OCI-LY7 (cell line): ENCODE measurements at regions of chr10 and their contacts with region 1.

Region 1: GRCh38 chr10:101818119-101818871 is at the start of gene OGA:
- DNase-seq: peak; percentile 100
- H3K4me3 ChIP-seq: peak within 1 kb of the TSS; percentile 95
- H3K27ac ChIP-seq: peak within 1 kb of the TSS; percentile 77
- H3K4me1 ChIP-seq: peaks cover 27% of the 10 kb centered on the region
- CTCF ChIP-seq: no peak
- total RNA-seq, gene OGA: 65.5 and 73.2 TPM in 2 replicates

Region 2: DNA sequence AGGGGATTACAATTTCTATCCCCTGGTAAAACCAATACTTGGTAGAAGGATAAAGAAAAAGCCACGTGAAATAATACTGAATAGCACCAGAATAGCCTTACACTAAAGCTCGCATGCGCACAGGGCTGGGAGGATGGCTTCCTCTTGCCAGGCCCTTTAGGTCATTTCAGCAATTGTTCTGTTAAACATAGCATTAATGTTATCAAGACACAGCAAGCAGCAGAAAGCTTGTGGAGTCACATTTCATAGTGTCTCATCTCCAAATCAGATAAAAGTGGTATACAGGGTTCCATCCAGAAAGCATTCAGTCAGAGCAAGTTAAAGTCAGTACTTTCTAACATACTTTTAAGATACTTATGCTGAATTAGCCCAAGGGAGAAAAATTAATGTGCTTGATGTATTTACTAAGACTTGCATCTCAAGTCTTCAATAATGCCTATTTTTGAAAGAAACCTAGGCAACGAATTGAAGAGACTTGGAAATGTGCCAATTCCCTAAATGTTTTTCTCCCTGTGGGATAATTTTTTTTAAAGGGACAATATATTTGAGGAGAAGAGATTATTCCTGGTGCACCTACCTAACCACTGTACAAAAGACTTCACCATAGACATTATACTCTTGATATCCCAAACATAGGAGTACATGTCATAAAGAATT is 20.8 kb before region 1 on chr10:
- CTCF ChIA-PET with region 1: no interaction called
- POLR2A ChIA-PET with region 1: interaction called, 10 read pairs
- intact Hi-C with region 1: no loop called
- DNase-seq: no peak
- H3K4me3 ChIP-seq: no peak overlapping the region
- H3K27ac ChIP-seq: no peak overlapping the region
- H3K4me1 ChIP-seq: no peaks in the 10 kb centered on the region
- CTCF ChIP-seq: no peak

Region 3: DNA sequence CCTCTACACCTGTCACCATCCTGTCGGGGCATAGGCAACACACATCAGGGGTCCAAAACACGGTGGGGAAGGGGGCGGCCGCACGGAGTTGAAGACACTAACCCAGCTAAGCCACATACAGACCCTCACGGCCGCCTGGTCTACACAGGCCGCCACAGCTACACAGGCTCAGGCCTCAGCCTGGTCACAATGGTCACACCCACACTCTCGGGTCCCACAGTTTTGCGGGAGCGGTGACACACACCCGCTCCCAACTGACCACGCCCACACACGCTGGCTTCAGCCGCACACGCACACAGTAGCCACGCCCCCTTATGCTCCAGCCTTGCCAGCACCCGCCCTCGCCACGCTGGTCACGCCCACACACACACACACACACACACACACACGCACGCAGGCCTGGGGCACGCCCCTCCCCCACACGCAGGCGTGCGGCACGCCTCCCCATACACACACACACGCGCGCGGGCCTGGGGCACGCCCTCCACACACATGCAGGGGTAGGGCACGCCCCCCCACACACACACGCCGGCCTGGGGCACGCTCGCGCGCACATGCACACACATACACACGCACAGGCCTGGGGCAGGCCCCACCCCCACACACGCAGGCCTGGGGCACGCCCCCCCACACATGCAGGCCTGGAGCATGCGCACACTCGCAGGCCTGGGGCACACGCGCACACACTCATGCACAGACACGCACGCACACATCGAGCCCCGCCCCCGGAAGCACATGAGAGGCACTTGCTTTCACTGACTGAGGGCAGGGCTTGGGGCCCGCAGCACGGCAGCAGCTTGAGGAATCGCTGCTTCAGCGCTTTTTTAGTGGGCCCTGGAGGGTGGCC is 12.2 kb after region 1 on chr10:
- CTCF ChIA-PET with region 1: interaction called, 7 read pairs
- POLR2A ChIA-PET with region 1: interaction called, 10 read pairs
- intact Hi-C with region 1: loop called (anchors 1 kb)
- DNase-seq: peak; percentile 92
- H3K4me3 ChIP-seq: peak overlapping the region; percentile 65
- H3K27ac ChIP-seq: peak overlapping the region; percentile 87
- H3K4me1 ChIP-seq: peaks cover 38% of the 10 kb centered on the region
- CTCF ChIP-seq: no peak

Region 4: DNA sequence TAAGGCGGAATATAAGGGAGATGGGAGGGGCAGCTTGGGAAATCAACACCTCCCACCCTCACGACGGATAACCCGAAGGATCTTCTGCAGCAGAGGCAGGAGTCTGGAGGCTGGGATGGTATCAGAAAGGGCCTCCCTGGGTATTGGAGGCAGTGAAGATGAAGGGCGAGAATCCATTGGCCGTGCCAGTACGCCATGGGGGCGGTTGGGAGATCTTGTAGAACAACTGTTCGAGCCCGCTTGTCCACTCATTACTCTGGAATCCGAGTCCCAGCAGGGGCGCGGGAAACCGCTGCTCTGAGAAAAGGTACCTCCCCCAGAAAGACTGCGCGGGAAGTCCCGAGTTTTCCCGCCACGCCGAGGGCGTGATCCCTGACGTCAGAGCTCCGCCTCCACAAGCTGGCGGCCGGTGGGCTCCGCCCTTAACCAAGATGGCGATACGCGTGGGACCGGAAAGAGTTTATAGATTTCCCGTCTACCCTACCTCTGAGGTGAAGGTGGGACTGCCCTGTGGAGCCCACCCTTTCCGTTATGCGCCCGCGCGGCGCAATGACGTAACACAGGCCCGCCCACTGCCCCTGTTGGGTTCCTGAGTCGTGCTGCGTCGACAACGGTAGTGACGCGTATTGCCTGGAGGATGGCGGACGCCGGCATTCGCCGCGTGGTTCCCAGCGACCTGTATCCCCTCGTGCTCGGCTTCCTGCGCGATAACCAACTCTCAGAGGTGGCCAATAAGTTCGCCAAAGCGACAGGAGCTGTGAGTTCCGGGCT is 333.7 kb after region 1 on chr10 and contains the start of gene NOLC1:
- CTCF ChIA-PET with region 1: no interaction called
- POLR2A ChIA-PET with region 1: no interaction called
- intact Hi-C with region 1: loop called (anchors 2 kb)
- DNase-seq: peak; percentile 99
- H3K4me3 ChIP-seq: peak within 1 kb of the TSS; percentile 88
- H3K27ac ChIP-seq: peak within 1 kb of the TSS; percentile 79
- H3K4me1 ChIP-seq: peaks cover 43% of the 10 kb centered on the region
- CTCF ChIP-seq: no peak
- total RNA-seq, gene NOLC1: 93.5 and 120 TPM in 2 replicates